GM23248 (cell line): ENCODE measurements at regions of chr5 and their contacts with region 1.

Region 1: GRCh38 chr5:80308526-80308925 is 11.3 kb upstream of the SPZ1 start:
- DNase-seq: no peak
- H3K4me3 ChIP-seq: no peak overlapping the region
- H3K27ac ChIP-seq: no peak overlapping the region
- H3K4me1 ChIP-seq: no peaks in the 10 kb centered on the region
- H3K27me3 ChIP-seq: no peaks in the 10 kb centered on the region

Region 2: GRCh38 chr5:80093796-80094195 is 214.7 kb before region 1 on chr5:
- in situ Hi-C with region 1: loop called (anchors 5 kb)
- DNase-seq: no peak
- H3K4me3 ChIP-seq: no peak overlapping the region
- H3K27ac ChIP-seq: no peak overlapping the region
- H3K4me1 ChIP-seq: no peaks in the 10 kb centered on the region
- H3K27me3 ChIP-seq: no peaks in the 10 kb centered on the region

Region 3: GRCh38 chr5:80216753-80217596 is 91.6 kb before region 1 on chr5:
- in situ Hi-C with region 1: no loop called
- DNase-seq: peak; percentile 53
- H3K4me3 ChIP-seq: no peak overlapping the region
- H3K27ac ChIP-seq: no peak overlapping the region
- H3K4me1 ChIP-seq: peaks cover 15% of the 10 kb centered on the region
- H3K27me3 ChIP-seq: no peaks in the 10 kb centered on the region